Sciatic nerve (tissue), 2 donors: ENCODE measurements at regions of chr5 and their contacts with region 1.

Region 1: DNA sequence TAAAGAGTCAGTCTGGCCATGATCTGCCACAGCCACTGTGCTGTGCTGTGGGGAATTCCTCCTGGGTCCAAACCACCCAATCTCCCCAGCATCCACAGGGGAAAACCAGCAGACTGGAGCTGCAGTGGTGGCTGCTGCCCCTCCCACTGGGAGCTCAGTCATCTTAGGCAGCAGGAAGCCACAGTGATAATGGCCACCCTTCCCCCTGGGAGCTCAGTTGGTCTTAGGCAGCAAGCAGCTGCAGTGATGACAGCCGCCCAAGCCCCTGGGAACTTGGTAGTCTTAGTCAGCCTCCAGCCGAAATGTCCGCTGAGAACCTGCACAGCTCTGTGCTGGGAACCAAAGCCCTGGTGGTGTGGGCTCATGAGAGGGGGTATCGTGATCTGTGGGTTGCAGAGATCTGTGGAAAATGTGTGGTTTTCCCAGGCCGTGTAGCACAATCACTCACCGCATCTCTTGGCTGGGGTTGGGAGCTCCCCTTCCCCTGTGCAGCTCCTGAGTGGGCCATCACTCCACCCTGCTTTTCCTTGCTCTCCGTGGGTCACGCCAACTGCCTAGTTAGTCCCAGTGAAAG is 38.4 kb upstream of the SMIM15 start:
- DNase-seq: no peak
- ATAC-seq: no peak

Region 2: GRCh38 chr5:59831326-59831989 is 1369.2 kb before region 1 on chr5:
- intact Hi-C with region 1: loop called (anchors 10 kb)
- DNase-seq: no peak
- ATAC-seq: no peak

Region 3: GRCh38 chr5:61228691-61229280 is 28.1 kb after region 1 on chr5:
- intact Hi-C with region 1: no loop called
- DNase-seq: no peak
- ATAC-seq: no peak